Mammary epithelial cell (primary cell): ENCODE measurements at regions of chrX and their contacts with region 1.

Region 1: GRCh38 chrX:132615391-132616131 is 126.7 kb upstream of the MBNL3 start:
- DNase-seq: peak; percentile 37
- H3K4me3 ChIP-seq: no peak overlapping the region
- H3K27ac ChIP-seq: no peak overlapping the region
- H3K4me1 ChIP-seq: no peaks in the 10 kb centered on the region
- H3K27me3 ChIP-seq: no peaks in the 10 kb centered on the region
- CTCF ChIP-seq: peak; percentile 29 to 45

Region 2: DNA sequence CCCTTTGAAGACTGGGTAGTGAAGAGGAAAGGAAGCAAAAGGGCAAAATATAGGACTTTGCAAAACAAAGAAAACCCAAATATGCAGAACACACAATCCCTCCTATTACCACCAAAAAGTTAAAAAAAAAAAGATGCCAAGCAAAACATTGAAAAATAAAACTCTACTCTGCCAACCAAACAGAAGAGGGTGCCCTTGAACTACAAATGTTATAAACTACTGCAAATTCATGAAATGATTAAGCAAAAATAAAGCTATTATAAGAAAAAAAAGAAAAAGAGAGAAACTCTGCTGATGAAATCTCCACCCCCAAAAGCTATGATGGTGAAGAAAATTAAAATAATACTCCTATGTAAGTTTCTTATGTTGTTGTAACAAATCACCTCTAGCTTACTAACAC is 761.0 kb before region 1 on chrX:
- CTCF ChIA-PET with region 1: no interaction called
- dilution Hi-C with region 1: no loop called
- in situ Hi-C with region 1: loop called in 1 of 2 experiments (anchors 25 kb)
- intact Hi-C with region 1: no loop called
- DNase-seq: no peak
- H3K4me3 ChIP-seq: no peak overlapping the region
- H3K27ac ChIP-seq: no peak overlapping the region
- H3K4me1 ChIP-seq: no peaks in the 10 kb centered on the region
- H3K27me3 ChIP-seq: peaks cover 2% of the 10 kb centered on the region
- CTCF ChIP-seq: peak; percentile 3 to 36

Region 3: DNA sequence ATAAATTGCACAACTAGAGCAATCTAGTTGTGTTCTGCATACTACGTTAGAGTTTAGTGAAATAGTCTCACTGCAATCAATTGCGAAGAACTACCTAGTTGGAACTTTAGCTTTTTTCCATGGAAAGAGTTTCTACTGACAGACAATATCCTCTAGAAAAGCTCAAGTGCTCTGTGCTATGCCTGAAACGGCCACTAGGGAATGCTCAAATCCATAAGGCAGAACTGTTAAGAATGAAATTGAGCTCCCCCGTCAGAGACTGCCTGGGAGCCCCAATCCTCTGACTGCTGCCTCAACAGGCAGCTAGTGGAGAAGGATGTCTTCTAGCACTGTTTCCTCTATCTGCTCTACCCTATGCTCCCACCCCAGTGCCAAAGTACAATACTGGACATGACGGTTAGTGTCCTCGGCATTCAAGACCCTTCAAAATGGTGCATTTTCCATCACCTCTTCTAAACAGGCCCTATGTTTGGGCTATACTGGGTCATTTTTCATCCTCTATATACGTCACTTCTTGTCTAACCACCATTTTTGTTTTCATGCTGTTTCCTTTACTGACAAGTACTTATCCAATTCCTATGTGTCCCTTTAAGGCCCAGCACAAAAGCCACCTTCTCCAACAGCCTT is 523.0 kb before region 1 on chrX:
- CTCF ChIA-PET with region 1: no interaction called
- dilution Hi-C with region 1: no loop called
- in situ Hi-C with region 1: loop called in 1 of 2 experiments (anchors 25 kb)
- intact Hi-C with region 1: loop called (anchors 5 kb)
- DNase-seq: peak; percentile 54
- H3K4me3 ChIP-seq: no peak overlapping the region
- H3K27ac ChIP-seq: no peak overlapping the region
- H3K4me1 ChIP-seq: no peaks in the 10 kb centered on the region
- H3K27me3 ChIP-seq: peaks cover 1% of the 10 kb centered on the region
- CTCF ChIP-seq: peak; percentile 89 to 90

Region 4: DNA sequence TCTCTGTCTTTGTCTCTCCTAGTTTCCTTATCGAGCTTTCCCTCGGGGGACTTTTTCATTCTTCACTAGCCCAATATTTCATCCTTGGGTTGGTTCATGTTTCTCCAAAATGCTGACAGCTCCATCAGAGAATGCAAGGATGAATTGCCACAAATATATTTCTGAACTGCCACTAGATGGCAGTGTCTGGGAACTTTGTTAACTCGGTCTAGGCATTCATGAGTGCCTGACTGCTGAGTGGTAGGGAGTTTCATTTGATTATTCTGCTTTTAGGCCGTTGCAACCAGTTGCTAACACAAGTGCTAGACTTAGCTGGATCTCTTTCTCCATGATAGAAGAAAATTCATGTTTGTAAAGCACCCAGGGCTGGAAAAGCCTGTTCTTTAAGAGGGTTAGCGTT is 322.8 kb before region 1 on chrX:
- CTCF ChIA-PET with region 1: interaction called, 4 read pairs
- dilution Hi-C with region 1: no loop called
- in situ Hi-C with region 1: no loop called
- intact Hi-C with region 1: loop called (anchors 1 kb)
- DNase-seq: peak; percentile 49
- H3K4me3 ChIP-seq: no peak overlapping the region
- H3K27ac ChIP-seq: no peak overlapping the region
- H3K4me1 ChIP-seq: no peaks in the 10 kb centered on the region
- H3K27me3 ChIP-seq: no peaks in the 10 kb centered on the region
- CTCF ChIP-seq: peak; percentile 52 to 75

Region 5: GRCh38 chrX:132488819-132489577 is 126.6 kb before region 1 on chrX and contains the start of gene MBNL3:
- CTCF ChIA-PET with region 1: no interaction called
- dilution Hi-C with region 1: no loop called
- in situ Hi-C with region 1: no loop called
- intact Hi-C with region 1: loop called (anchors 1 kb)
- DNase-seq: peak; percentile 66
- H3K4me3 ChIP-seq: peak within 1 kb of the TSS; percentile 61 to 72 (median 67)
- H3K27ac ChIP-seq: peak within 1 kb of the TSS; percentile 75
- H3K4me1 ChIP-seq: peaks cover 10% of the 10 kb centered on the region
- H3K27me3 ChIP-seq: no peaks in the 10 kb centered on the region
- CTCF ChIP-seq: no peak
- total RNA-seq, gene MBNL3: 5.7 to 12.9 TPM